CD8-positive, alpha-beta T cell (primary cell): ENCODE measurements at regions of chr1 and their contacts with region 1.

Region 1: GRCh38 chr1:2391041-2391930 is at the starts of genes MORN1 and RER1:
- DNase-seq: peak; percentile 97 to 100 (median 99)
- ATAC-seq: peak; percentile 95
- H3K4me3 ChIP-seq: peak within 1 kb of the TSS; percentile 57 to 90
- H3K4me3 Mint-ChIP-seq: peak within 1 kb of the TSS; percentile 91
- H3K27ac ChIP-seq: peak within 1 kb of the TSS; percentile 67 to 70
- H3K27ac Mint-ChIP-seq: peak within 1 kb of the TSS; percentile 94
- H3K4me1 ChIP-seq: peaks cover 37% of the 10 kb centered on the region
- H3K4me1 Mint-ChIP-seq: peaks cover 30% of the 10 kb centered on the region
- H3K27me3 ChIP-seq: no peaks in the 10 kb centered on the region
- H3K27me3 Mint-ChIP-seq: no peaks in the 10 kb centered on the region
- CTCF ChIP-seq: no peak
- total RNA-seq, gene MORN1: 4.9 to 5.0 TPM
- total RNA-seq, gene RER1: 54.6 to 58.7 TPM

Region 2: GRCh38 chr1:1374929-1375662 is 1016.2 kb before region 1 on chr1 and contains the start of gene AURKAIP1:
- CTCF ChIA-PET with region 1: no interaction called
- POLR2A ChIA-PET with region 1: no interaction called
- intact Hi-C with region 1: loop called in 1 of 2 experiments (anchors 5 kb)
- DNase-seq: peak; percentile 89 to 100 (median 95)
- ATAC-seq: peak; percentile 58
- H3K4me3 ChIP-seq: peak within 1 kb of the TSS; percentile 79 to 91
- H3K4me3 Mint-ChIP-seq: peak within 1 kb of the TSS; percentile 86
- H3K27ac ChIP-seq: peak within 1 kb of the TSS; percentile 83 to 94
- H3K27ac Mint-ChIP-seq: peak within 1 kb of the TSS; percentile 94
- H3K4me1 ChIP-seq: peaks cover 33% of the 10 kb centered on the region
- H3K4me1 Mint-ChIP-seq: peaks cover 33% of the 10 kb centered on the region
- H3K27me3 ChIP-seq: no peaks in the 10 kb centered on the region
- H3K27me3 Mint-ChIP-seq: no peaks in the 10 kb centered on the region
- CTCF ChIP-seq: no peak
- total RNA-seq, gene AURKAIP1: 58.4 to 62.6 TPM

Region 3: GRCh38 chr1:1919304-1920056 is 471.8 kb before region 1 on chr1:
- CTCF ChIA-PET with region 1: no interaction called
- POLR2A ChIA-PET with region 1: interaction called, 3 read pairs
- intact Hi-C with region 1: loop called in 1 of 2 experiments (anchors 2 kb)
- DNase-seq: peak; percentile 97 to 100 (median 99)
- ATAC-seq: peak; percentile 89
- H3K4me3 ChIP-seq: peak overlapping the region; percentile 39 to 74
- H3K4me3 Mint-ChIP-seq: peak overlapping the region; percentile 47
- H3K27ac ChIP-seq: peak overlapping the region in 1 of 2 experiments; percentile 28
- H3K27ac Mint-ChIP-seq: peak overlapping the region; percentile 5
- H3K4me1 ChIP-seq: peaks cover 17% of the 10 kb centered on the region
- H3K4me1 Mint-ChIP-seq: peaks cover 3% of the 10 kb centered on the region
- H3K27me3 ChIP-seq: no peaks in the 10 kb centered on the region
- H3K27me3 Mint-ChIP-seq: no peaks in the 10 kb centered on the region
- CTCF ChIP-seq: no peak

Region 4: GRCh38 chr1:2227346-2228153 is 163.7 kb before region 1 on chr1:
- CTCF ChIA-PET with region 1: no interaction called
- POLR2A ChIA-PET with region 1: interaction called, 6 read pairs
- intact Hi-C with region 1: loop called in 1 of 2 experiments (anchors 1 kb)
- DNase-seq: peak; percentile 88 to 97 (median 91)
- ATAC-seq: peak; percentile 70
- H3K4me3 ChIP-seq: peak overlapping the region in 1 of 2 experiments; percentile 24
- H3K4me3 Mint-ChIP-seq: peak overlapping the region; percentile 68
- H3K27ac ChIP-seq: peak overlapping the region in 1 of 2 experiments; percentile 66
- H3K27ac Mint-ChIP-seq: peak overlapping the region; percentile 74
- H3K4me1 ChIP-seq: peaks cover 24% of the 10 kb centered on the region
- H3K4me1 Mint-ChIP-seq: peaks cover 21% of the 10 kb centered on the region
- H3K27me3 ChIP-seq: no peaks in the 10 kb centered on the region
- H3K27me3 Mint-ChIP-seq: no peaks in the 10 kb centered on the region
- CTCF ChIP-seq: no peak

Region 5: DNA sequence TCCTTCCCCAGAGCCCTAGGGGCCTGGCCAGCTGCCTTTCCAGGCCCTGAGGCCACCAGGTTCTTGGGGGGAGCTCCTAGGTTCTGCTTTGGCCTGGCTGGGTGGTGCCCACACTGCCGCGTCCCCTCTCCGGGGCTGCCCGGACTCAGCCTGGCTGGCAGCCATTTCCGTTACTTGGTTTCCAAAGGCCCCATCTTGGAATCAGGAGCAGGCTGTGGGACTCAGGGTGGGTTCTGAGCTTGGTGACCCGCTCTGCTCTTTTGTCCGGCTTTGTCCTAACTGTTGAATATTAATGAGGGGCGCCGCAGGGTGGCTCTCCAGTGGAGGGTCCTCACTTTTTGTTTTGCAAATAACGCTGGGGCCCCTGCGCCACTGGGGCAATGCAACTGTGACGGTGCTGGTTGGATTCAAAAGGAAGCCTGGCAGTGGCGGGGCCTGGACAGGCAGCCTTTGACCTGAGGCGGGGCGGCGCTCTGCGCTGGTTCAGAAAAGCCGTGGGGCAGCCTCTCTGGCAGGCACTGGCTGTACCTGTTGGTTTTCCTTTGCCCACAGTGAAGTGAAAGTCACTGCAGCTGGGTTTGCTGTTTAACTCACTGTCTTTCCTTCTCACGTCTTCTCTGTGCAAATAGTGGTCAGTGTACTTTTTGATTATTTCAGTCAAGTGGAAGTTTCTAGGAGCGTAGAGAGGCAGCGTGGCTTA is 143.0 kb before region 1 on chr1:
- CTCF ChIA-PET with region 1: no interaction called
- POLR2A ChIA-PET with region 1: no interaction called
- intact Hi-C with region 1: no loop called
- DNase-seq: no peak
- ATAC-seq: no peak
- H3K4me3 ChIP-seq: no peak overlapping the region
- H3K4me3 Mint-ChIP-seq: peak overlapping the region; percentile 4
- H3K27ac ChIP-seq: no peak overlapping the region
- H3K27ac Mint-ChIP-seq: peak overlapping the region; percentile 50
- H3K4me1 ChIP-seq: peaks cover 90% of the 10 kb centered on the region
- H3K4me1 Mint-ChIP-seq: peaks cover 73% of the 10 kb centered on the region
- H3K27me3 ChIP-seq: no peaks in the 10 kb centered on the region
- H3K27me3 Mint-ChIP-seq: no peaks in the 10 kb centered on the region
- CTCF ChIP-seq: no peak

Region 6: DNA sequence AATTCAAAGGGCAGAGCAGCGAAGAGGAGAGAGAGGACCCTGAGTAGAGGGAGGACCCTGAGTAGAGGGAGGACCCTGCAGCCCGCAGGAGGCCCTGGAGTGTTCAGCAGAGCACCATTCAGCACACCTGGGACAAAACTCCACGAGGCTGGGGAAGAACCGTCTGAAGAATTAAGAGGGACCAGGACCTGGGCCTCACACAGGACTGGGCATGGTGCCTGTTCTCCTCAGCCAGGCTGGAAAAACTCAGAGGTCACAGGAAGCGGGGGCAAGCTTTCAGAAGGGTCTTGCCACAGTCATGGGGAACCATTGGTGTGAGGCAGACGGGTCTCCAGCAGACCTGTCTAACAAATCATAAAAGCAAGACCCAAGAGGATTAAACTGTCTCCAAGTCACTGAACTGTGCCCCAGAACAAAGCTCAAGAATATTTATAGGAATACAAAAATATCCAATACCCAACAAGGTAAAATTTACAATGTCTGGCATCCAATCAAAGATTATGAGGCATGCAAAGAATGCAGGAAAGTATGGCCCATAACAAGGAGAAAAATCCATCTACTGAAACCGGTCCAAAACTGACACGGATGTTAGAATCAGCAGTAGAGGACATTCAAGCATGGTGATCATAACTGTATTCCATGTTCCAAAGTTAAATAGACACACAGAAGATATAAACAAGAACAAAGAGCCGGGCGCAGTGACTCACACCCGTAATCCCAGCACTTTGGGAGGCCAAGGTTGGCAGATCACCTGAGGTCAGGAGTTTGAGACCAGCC is 30.5 kb before region 1 on chr1:
- CTCF ChIA-PET with region 1: no interaction called
- POLR2A ChIA-PET with region 1: no interaction called
- intact Hi-C with region 1: no loop called
- DNase-seq: peak in 1 of 9 experiments; percentile 11
- ATAC-seq: no peak
- H3K4me3 ChIP-seq: no peak overlapping the region
- H3K4me3 Mint-ChIP-seq: no peak overlapping the region
- H3K27ac ChIP-seq: no peak overlapping the region
- H3K27ac Mint-ChIP-seq: no peak overlapping the region
- H3K4me1 ChIP-seq: no peaks in the 10 kb centered on the region
- H3K4me1 Mint-ChIP-seq: no peaks in the 10 kb centered on the region
- H3K27me3 ChIP-seq: no peaks in the 10 kb centered on the region
- H3K27me3 Mint-ChIP-seq: no peaks in the 10 kb centered on the region
- CTCF ChIP-seq: no peak

Region 7: GRCh38 chr1:2412519-2413233 is 21.4 kb after region 1 on chr1 and contains the start of gene PEX10:
- CTCF ChIA-PET with region 1: interaction called, 3 read pairs
- POLR2A ChIA-PET with region 1: interaction called, 8 read pairs
- intact Hi-C with region 1: loop called (anchors 1 kb)
- DNase-seq: peak; percentile 97 to 100 (median 99)
- ATAC-seq: peak; percentile 91
- H3K4me3 ChIP-seq: peak within 1 kb of the TSS; percentile 64 to 89
- H3K4me3 Mint-ChIP-seq: peak within 1 kb of the TSS; percentile 86
- H3K27ac ChIP-seq: peak within 1 kb of the TSS; percentile 81 to 93
- H3K27ac Mint-ChIP-seq: peak within 1 kb of the TSS; percentile 93
- H3K4me1 ChIP-seq: peaks cover 53% of the 10 kb centered on the region
- H3K4me1 Mint-ChIP-seq: peaks cover 40% of the 10 kb centered on the region
- H3K27me3 ChIP-seq: no peaks in the 10 kb centered on the region
- H3K27me3 Mint-ChIP-seq: no peaks in the 10 kb centered on the region
- CTCF ChIP-seq: no peak
- total RNA-seq, gene PEX10: 11.6 to 11.8 TPM

Region 8: DNA sequence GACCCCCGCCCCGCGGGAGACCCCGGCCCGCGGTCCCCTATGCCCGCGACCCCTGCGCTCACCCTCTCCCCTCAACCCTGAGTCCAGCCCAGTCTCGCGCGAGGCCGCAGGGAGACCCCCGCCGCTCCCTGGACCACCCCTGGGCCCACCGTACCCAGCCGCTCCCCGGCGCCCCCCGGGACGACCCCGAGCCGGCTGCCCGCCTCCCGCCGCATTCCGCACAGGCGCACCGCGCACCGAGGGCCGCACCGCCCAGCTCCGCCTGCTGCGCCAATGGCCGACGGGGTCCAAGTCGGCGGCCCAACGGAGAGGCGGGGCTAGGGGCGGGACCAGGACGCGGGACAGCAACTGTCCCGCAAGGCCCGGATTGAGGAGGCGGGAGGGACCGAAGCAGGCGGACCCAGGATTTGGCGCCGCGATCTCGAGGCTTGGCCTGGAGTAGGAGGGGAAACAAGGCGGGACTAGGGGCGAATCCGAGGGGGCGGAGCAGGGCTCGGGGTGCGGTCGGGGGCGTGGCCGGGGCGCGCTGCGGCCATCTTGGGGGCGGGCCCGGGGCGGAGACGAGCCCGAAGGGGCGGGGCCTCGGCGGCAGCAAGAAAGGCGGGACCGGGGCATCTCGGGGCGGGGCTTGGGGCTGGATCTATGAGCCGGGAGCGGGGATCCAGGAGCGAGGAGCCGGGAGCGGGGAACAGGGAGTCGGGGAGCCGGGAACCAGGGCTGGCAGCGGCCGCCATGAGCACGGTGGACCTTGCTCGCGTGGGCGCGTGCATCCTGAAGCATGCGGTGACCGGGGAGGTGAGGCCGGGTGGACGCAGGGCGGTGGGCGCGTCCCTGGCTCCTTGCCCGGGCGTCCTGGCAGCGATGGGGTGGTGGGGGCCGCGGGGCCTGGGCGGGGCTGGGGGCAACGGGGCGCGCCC is 195.1 kb after region 1 on chr1 and contains the start of gene PRXL2B:
- CTCF ChIA-PET with region 1: no interaction called
- POLR2A ChIA-PET with region 1: interaction called, 9 read pairs
- intact Hi-C with region 1: loop called (anchors 1 kb)
- DNase-seq: peak; percentile 94 to 99 (median 97)
- ATAC-seq: peak; percentile 69
- H3K4me3 ChIP-seq: peak within 1 kb of the TSS; percentile 79 to 95
- H3K4me3 Mint-ChIP-seq: peak within 1 kb of the TSS; percentile 93
- H3K27ac ChIP-seq: peak within 1 kb of the TSS; percentile 95 to 98
- H3K27ac Mint-ChIP-seq: peak within 1 kb of the TSS; percentile 99
- H3K4me1 ChIP-seq: peaks cover 37% of the 10 kb centered on the region
- H3K4me1 Mint-ChIP-seq: peaks cover 40% of the 10 kb centered on the region
- H3K27me3 ChIP-seq: no peaks in the 10 kb centered on the region
- H3K27me3 Mint-ChIP-seq: no peaks in the 10 kb centered on the region
- CTCF ChIP-seq: no peak
- total RNA-seq, gene PRXL2B: 13.5 to 15.9 TPM

Region 9: GRCh38 chr1:2628191-2628932 is 237.1 kb after region 1 on chr1:
- CTCF ChIA-PET with region 1: no interaction called
- POLR2A ChIA-PET with region 1: no interaction called
- intact Hi-C with region 1: no loop called
- DNase-seq: no peak
- ATAC-seq: no peak
- H3K4me3 ChIP-seq: no peak overlapping the region
- H3K4me3 Mint-ChIP-seq: peak overlapping the region; percentile 18
- H3K27ac ChIP-seq: no peak overlapping the region
- H3K27ac Mint-ChIP-seq: no peak overlapping the region
- H3K4me1 ChIP-seq: peaks cover 5% of the 10 kb centered on the region
- H3K4me1 Mint-ChIP-seq: peaks cover 22% of the 10 kb centered on the region
- H3K27me3 ChIP-seq: peaks cover 6 to 21% of the 10 kb centered on the region in 2 experiments
- H3K27me3 Mint-ChIP-seq: peaks cover 42% of the 10 kb centered on the region
- CTCF ChIP-seq: no peak